ENCODE measurements at regions of chr3 and their contacts with region 1.

Region 1: DNA sequence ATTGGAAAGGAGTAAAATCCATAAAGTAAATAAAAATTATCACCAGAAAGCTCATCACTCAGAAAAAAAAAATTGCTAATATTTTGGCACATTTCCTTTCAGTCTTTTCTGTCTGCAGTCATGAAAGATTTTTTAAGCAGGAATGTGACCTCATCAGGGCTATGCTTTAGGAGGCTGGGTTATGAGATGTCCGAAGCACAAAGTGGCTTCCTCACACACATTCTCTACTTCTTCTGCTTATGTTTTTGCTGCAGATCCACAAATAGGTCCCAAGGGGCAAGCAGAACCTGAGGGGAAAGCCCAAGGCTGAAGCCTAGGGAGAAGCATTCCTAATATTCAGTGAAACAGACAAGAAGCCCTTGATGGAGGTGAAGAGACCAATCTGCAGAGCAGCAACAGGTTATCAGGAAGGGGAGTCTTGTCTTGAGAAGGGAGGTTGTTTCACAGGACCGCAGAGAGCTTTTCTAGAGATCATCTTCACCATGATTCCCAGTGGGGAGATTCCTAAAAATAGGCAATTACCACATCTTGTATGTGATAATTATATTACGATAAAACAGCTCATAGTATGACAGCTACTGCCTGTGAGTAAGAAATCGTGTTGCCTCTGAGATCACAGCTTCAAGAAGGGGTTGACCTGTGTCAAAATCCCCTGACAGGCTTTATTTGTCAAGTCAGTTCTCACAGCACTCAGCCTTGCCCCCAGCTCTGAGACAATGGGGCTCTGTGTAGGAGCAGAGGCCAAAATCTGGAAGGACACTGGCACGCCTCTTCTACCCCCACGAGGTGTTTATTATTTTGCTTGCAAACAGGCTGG is 60.5 kb downstream of the IGF2BP2 start:
- DNase-seq: no peak
- ATAC-seq: peak; percentile 50
- H3K4me3 ChIP-seq: no peak overlapping the region
- H3K4me3 Mint-ChIP-seq: no peak overlapping the region
- H3K27ac ChIP-seq: no peak overlapping the region
- H3K27ac Mint-ChIP-seq: peak overlapping the region in 1 of 9 donors; percentile 9
- H3K4me1 ChIP-seq: no peaks in the 10 kb centered on the region
- H3K4me1 Mint-ChIP-seq: peaks cover 0 to 8% (median 4%) of the 10 kb centered on the region in 7 donors
- H3K27me3 ChIP-seq: no peaks in the 10 kb centered on the region
- H3K27me3 Mint-ChIP-seq: peaks cover 29 to 58% (median 43%) of the 10 kb centered on the region in 5 donors

Region 2: GRCh38 chr3:185659942-185660921 is 104.1 kb before region 1 on chr3:
- CTCF ChIA-PET with region 1: interaction called, 4 read pairs
- POLR2A ChIA-PET with region 1: no interaction called
- intact Hi-C with region 1: loop called (anchors 1 kb)
- DNase-seq: peak; percentile 35 to 60 (median 46)
- ATAC-seq: peak; percentile 88
- H3K4me3 ChIP-seq: no peak overlapping the region
- H3K4me3 Mint-ChIP-seq: no peak overlapping the region
- H3K27ac ChIP-seq: no peak overlapping the region
- H3K27ac Mint-ChIP-seq: no peak overlapping the region
- H3K4me1 ChIP-seq: no peaks in the 10 kb centered on the region
- H3K4me1 Mint-ChIP-seq: peaks cover 0 to 10% (median 0%) of the 10 kb centered on the region in 7 donors
- H3K27me3 ChIP-seq: no peaks in the 10 kb centered on the region
- H3K27me3 Mint-ChIP-seq: peaks cover 15 to 40% (median 20%) of the 10 kb centered on the region in 5 donors

Region 3: GRCh38 chr3:185677146-185677829 is 87.1 kb before region 1 on chr3:
- CTCF ChIA-PET with region 1: no interaction called
- POLR2A ChIA-PET with region 1: no interaction called
- intact Hi-C with region 1: loop called in 1 of 2 experiments (anchors 1 kb)
- DNase-seq: no peak
- ATAC-seq: peak; percentile 45
- H3K4me3 ChIP-seq: no peak overlapping the region
- H3K4me3 Mint-ChIP-seq: no peak overlapping the region
- H3K27ac ChIP-seq: no peak overlapping the region
- H3K27ac Mint-ChIP-seq: no peak overlapping the region
- H3K4me1 ChIP-seq: no peaks in the 10 kb centered on the region
- H3K4me1 Mint-ChIP-seq: no peaks in the 10 kb centered on the region
- H3K27me3 ChIP-seq: peaks cover 0 to 2% of the 10 kb centered on the region in 2 donors
- H3K27me3 Mint-ChIP-seq: peaks cover 11 to 58% (median 27%) of the 10 kb centered on the region in 5 donors

Region 4: DNA sequence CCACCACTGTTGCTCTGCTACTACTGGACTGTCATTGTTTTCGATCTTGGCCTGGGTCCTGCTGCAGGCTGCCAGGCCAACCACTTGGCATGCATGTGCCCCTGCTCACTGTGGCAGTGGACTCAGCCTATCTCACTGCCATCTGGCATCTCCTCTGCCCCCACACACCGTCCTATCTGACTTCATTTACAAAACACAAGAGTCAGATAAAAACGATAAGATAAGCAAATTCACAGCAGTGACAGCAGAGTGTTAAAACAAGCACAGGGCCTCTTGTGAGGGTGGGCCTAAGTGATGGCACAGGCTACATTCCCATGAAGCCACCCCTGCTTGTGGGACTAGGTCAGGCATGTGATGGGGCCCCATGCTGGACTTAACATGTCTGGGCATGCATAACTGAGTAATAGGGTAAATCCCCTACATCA is 711.7 kb after region 1 on chr3:
- CTCF ChIA-PET with region 1: no interaction called
- POLR2A ChIA-PET with region 1: no interaction called
- intact Hi-C with region 1: no loop called
- DNase-seq: no peak
- ATAC-seq: no peak
- H3K4me3 ChIP-seq: no peak overlapping the region
- H3K4me3 Mint-ChIP-seq: no peak overlapping the region
- H3K27ac ChIP-seq: no peak overlapping the region
- H3K27ac Mint-ChIP-seq: peak overlapping the region in 1 of 9 donors; percentile 26
- H3K4me1 ChIP-seq: no peaks in the 10 kb centered on the region
- H3K4me1 Mint-ChIP-seq: peaks cover 0 to 10% (median 0%) of the 10 kb centered on the region in 7 donors
- H3K27me3 ChIP-seq: no peaks in the 10 kb centered on the region
- H3K27me3 Mint-ChIP-seq: peaks cover 0 to 6% (median 0%) of the 10 kb centered on the region in 5 donors

Measured in naive thymus-derived CD4-positive, alpha-beta T cell (primary cell).